ENCODE measurements at regions of chr1 and their contacts with region 1.

Region 1: DNA sequence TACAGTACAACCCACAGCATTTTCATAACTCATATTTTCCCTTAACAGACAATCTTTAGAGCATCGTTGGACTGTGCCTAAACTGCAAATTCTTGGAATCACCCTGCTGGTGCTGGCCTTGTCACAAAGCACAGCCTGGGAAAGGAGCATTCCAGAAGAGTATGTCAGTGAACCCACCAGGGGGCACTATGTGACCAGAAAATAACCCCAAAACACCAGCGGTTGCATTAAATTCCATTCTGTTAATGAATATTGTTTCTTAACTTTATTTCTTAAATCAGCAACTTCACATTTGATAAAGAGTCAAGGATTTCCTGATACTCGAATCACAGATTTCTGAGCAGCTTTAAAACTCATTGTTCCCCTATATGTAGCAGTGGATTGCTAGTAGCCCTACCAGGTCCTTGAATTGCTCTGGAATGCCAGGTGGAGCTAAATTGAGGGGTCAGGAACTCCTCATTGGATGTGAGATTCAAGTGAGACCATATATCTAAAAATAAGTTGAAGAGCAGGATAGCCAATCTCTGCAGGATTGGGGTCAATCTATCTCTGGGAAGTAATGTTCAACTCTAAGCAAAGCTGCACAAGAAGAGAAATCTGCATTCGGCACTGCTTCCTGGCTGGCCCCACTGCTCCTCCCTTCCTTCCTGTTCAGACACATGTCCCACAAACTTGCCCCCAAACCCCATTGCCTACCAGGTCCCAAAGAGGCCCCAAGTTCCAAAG is 12.7 kb upstream of the RAB4A start:
- DNase-seq: peak; percentile 83
- H3K4me3 Mint-ChIP-seq: no peak overlapping the region
- H3K27ac Mint-ChIP-seq: no peak overlapping the region
- H3K4me1 Mint-ChIP-seq: peaks cover 26% of the 10 kb centered on the region
- H3K27me3 Mint-ChIP-seq: no peaks in the 10 kb centered on the region
- CTCF ChIP-seq: peak; percentile 85

Region 2: GRCh38 chr1:228691926-228692325 is 566.3 kb before region 1 on chr1:
- CTCF ChIA-PET with region 1: interaction called, 13 read pairs
- intact Hi-C with region 1: loop called (anchors 1 kb)
- DNase-seq: peak; percentile 58
- H3K4me3 Mint-ChIP-seq: no peak overlapping the region
- H3K27ac Mint-ChIP-seq: no peak overlapping the region
- H3K4me1 Mint-ChIP-seq: peaks cover 11% of the 10 kb centered on the region
- H3K27me3 Mint-ChIP-seq: peaks cover 15% of the 10 kb centered on the region
- CTCF ChIP-seq: peak; percentile 58

Region 3: DNA sequence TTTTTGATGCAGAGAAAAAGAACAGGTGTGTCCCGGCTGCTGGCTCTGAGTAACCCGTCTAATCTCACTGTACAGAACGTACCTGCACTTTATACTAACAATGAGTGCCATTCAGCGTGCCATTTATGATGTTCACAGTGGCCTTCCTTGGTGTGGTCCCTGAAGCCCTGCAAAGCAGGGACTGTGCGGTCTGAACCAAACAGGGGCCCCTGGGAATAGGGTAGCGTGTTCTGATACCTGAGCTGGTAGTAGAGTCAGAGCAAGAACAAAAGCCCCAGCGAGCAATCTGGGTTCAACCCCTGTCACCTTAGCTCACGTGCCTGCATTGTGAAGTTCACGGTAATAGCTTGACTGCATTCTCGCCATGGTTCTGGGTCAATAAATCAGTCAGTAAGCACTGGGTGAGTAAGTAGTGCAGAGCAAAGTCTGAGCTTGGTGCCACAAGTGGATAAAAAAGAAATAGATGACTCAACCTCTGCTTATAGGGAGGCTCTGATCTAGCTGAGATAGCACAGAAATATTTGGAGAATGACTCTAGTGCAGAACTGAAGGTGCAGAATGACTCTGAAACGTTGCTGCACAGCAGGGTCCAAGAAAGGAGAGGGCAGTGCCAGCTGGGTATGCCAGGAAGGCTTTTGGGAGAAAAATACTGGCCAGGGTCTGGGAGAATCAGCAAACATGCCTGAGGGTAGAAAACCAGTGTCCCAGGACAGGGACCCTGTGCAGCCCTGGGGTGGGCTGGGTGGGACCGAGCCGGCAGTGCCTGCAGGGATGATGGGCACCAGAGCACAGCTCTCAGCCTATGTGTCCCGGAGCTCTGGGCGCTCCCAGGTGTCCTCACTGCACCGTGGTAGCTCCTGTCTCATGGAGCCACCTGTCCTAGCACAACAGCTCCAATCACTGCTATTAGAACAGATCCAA is 397.0 kb before region 1 on chr1:
- CTCF ChIA-PET with region 1: no interaction called
- intact Hi-C with region 1: no loop called
- DNase-seq: peak; percentile 73
- H3K4me3 Mint-ChIP-seq: peak overlapping the region; percentile 15
- H3K27ac Mint-ChIP-seq: peak overlapping the region; percentile 46
- H3K4me1 Mint-ChIP-seq: peaks cover 56% of the 10 kb centered on the region
- H3K27me3 Mint-ChIP-seq: no peaks in the 10 kb centered on the region
- CTCF ChIP-seq: no peak

Region 4: DNA sequence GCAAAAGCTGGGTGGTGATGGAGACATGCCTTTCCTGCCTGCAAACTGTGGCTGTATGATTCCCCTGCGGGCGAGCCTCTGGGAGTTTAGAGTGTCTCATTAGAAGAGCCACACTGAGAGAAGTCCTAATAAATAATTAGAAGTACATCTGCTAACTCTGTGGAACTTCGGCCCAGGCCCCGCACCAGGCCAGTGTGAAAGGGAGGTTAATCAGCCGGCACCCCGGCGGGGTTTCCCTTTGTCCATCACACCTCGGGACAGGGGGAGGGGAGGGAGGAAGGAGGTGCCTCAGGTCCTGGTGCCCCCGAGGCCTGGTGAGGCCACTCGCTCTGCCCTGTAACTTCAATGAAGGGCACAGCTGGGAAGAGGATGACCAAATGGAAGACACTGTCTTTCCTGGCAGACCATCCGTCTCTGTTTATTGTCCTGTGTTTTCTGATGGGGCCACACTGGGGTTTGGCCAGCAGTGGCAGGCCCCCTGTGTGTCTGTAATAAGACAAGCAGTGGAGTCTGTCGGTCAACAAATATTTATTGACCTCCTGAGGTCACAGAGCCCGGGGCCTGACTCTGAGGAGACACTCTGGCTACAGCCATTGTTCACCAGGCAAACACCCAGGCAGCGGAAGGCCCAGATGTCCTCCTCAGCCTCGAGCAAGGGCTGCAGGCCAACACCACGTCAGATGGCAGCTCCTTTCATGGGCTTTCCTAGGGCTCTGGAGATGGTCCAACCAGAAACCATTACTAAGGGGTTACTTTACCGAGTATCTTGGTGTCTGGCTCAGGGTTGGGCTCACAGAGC is 254.8 kb before region 1 on chr1:
- CTCF ChIA-PET with region 1: no interaction called
- intact Hi-C with region 1: no loop called
- DNase-seq: no peak
- H3K4me3 Mint-ChIP-seq: no peak overlapping the region
- H3K27ac Mint-ChIP-seq: no peak overlapping the region
- H3K4me1 Mint-ChIP-seq: no peaks in the 10 kb centered on the region
- H3K27me3 Mint-ChIP-seq: no peaks in the 10 kb centered on the region
- CTCF ChIP-seq: no peak

Region 5: GRCh38 chr1:229227298-229227919 is 30.8 kb before region 1 on chr1:
- CTCF ChIA-PET with region 1: interaction called, 15 read pairs
- intact Hi-C with region 1: loop called (anchors 1 kb)
- DNase-seq: peak; percentile 92
- H3K4me3 Mint-ChIP-seq: no peak overlapping the region
- H3K27ac Mint-ChIP-seq: peak overlapping the region; percentile 33
- H3K4me1 Mint-ChIP-seq: peaks cover 69% of the 10 kb centered on the region
- H3K27me3 Mint-ChIP-seq: no peaks in the 10 kb centered on the region
- CTCF ChIP-seq: peak; percentile 92

Region 6: GRCh38 chr1:229482511-229482910 is 224.3 kb after region 1 on chr1:
- CTCF ChIA-PET with region 1: interaction called, 19 read pairs
- intact Hi-C with region 1: loop called (anchors 1 kb)
- DNase-seq: no peak
- H3K4me3 Mint-ChIP-seq: no peak overlapping the region
- H3K27ac Mint-ChIP-seq: no peak overlapping the region
- H3K4me1 Mint-ChIP-seq: no peaks in the 10 kb centered on the region
- H3K27me3 Mint-ChIP-seq: no peaks in the 10 kb centered on the region
- CTCF ChIP-seq: no peak

Region 7: GRCh38 chr1:230310381-230311163 is 1052.4 kb after region 1 on chr1:
- CTCF ChIA-PET with region 1: no interaction called
- intact Hi-C with region 1: loop called (anchors 5 kb)
- DNase-seq: peak; percentile 82
- H3K4me3 Mint-ChIP-seq: no peak overlapping the region
- H3K27ac Mint-ChIP-seq: peak overlapping the region; percentile 7
- H3K4me1 Mint-ChIP-seq: peaks cover 36% of the 10 kb centered on the region
- H3K27me3 Mint-ChIP-seq: no peaks in the 10 kb centered on the region
- CTCF ChIP-seq: peak; percentile 79